Activated B cell treated with CpG ODN at 0.5 μM for 24 hours (primary cell): ENCODE measurements at regions of chr4 and their contacts with region 1.

Region 1: DNA sequence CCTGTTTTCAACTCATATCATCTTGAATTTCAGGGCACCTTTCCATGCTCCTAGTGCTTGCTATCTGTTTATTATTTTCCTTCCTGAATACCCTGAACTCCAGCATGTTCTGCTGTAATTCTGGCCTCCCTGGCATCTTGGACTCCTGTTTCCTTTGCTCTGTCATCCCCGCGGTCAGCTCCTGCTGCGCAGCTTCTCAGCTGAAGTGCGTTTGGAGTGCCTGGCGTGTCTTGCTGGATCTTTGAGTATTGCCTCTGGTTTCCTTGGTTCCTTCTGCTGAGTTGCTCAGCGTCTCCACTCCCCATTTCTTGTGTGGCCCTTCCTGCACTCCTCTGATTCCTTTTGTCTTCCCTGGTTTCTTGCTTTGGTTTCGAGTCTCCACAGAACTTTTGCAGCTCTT is 84.4 kb downstream of the HTT start:
- DNase-seq: no peak
- ATAC-seq: no peak
- H3K4me3 Mint-ChIP-seq: no peak overlapping the region
- H3K27ac Mint-ChIP-seq: no peak overlapping the region
- H3K4me1 Mint-ChIP-seq: peaks cover 3% of the 10 kb centered on the region
- H3K27me3 Mint-ChIP-seq: no peaks in the 10 kb centered on the region
- CTCF ChIP-seq: no peak

Region 2: GRCh38 chr4:3122081-3122563 is 36.7 kb before region 1 on chr4:
- CTCF ChIA-PET with region 1: no interaction called
- POLR2A ChIA-PET with region 1: no interaction called
- intact Hi-C with region 1: loop called (anchors 5 kb)
- DNase-seq: no peak
- ATAC-seq: no peak
- H3K4me3 Mint-ChIP-seq: no peak overlapping the region
- H3K27ac Mint-ChIP-seq: no peak overlapping the region
- H3K4me1 Mint-ChIP-seq: no peaks in the 10 kb centered on the region
- H3K27me3 Mint-ChIP-seq: no peaks in the 10 kb centered on the region
- CTCF ChIP-seq: no peak

Region 3: DNA sequence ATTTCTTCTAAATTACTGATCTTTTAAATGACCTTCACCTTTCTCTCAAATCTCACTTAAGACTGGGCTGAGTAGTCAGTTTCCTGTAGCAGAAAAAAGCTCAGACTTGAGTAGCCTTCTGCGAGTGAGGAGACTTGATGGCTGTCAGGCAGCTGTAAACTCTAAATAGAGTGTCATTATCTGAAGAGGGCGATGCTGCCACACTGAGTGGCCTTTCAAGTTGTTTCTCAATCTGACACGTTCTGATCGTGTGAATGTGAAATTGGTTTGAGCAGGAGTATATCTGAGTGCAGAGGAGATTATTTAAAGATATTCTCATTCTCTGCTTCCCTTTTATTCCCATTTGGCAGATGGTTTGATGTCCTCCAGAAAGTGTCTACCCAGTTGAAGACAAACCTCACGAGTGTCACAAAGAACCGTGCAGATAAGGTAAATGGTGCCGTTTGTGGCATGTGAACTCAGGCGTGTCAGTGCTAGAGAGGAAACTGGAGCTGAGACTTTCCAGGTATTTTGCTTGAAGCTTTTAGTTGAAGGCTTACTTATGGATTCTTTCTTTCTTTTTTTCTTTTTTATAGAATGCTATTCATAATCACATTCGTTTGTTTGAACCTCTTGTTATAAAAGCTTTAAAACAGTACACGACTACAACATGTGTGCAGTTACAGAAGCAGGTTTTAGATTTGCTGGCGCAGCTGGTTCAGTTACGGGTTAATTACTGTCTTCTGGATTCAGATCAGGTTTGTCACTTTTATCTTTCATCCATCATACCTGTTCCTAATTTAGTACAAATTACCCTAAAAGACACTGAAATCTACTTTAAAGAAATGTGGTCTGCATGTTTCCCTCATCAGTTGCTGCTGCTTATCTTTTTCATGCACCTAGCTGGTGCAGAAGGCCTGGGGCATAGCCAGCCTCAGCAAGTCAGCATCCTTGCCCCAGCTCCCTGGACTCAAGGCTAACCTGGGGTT is 15.8 kb after region 1 on chr4:
- CTCF ChIA-PET with region 1: no interaction called
- POLR2A ChIA-PET with region 1: no interaction called
- intact Hi-C with region 1: loop called (anchors 2 kb)
- DNase-seq: no peak
- ATAC-seq: no peak
- H3K4me3 Mint-ChIP-seq: no peak overlapping the region
- H3K27ac Mint-ChIP-seq: no peak overlapping the region
- H3K4me1 Mint-ChIP-seq: no peaks in the 10 kb centered on the region
- H3K27me3 Mint-ChIP-seq: no peaks in the 10 kb centered on the region
- CTCF ChIP-seq: no peak